ENCODE measurements at regions of chr2 and their contacts with region 1.

Region 1: GRCh38 chr2:31987464-31988220 is 23.2 kb downstream of the MEMO1 start:
- DNase-seq: peak; percentile 67
- H3K4me3 Mint-ChIP-seq: no peak overlapping the region
- H3K27ac Mint-ChIP-seq: no peak overlapping the region
- H3K4me1 Mint-ChIP-seq: peaks cover 17% of the 10 kb centered on the region
- H3K27me3 Mint-ChIP-seq: no peaks in the 10 kb centered on the region
- CTCF ChIP-seq: no peak

Region 2: GRCh38 chr2:31675485-31675901 is 312.1 kb before region 1 on chr2:
- CTCF ChIA-PET with region 1: no interaction called
- POLR2A ChIA-PET with region 1: no interaction called
- intact Hi-C with region 1: no loop called
- DNase-seq: peak; percentile 16
- H3K4me3 Mint-ChIP-seq: no peak overlapping the region
- H3K27ac Mint-ChIP-seq: no peak overlapping the region
- H3K4me1 Mint-ChIP-seq: peaks cover 11% of the 10 kb centered on the region
- H3K27me3 Mint-ChIP-seq: no peaks in the 10 kb centered on the region
- CTCF ChIP-seq: no peak

Region 3: DNA sequence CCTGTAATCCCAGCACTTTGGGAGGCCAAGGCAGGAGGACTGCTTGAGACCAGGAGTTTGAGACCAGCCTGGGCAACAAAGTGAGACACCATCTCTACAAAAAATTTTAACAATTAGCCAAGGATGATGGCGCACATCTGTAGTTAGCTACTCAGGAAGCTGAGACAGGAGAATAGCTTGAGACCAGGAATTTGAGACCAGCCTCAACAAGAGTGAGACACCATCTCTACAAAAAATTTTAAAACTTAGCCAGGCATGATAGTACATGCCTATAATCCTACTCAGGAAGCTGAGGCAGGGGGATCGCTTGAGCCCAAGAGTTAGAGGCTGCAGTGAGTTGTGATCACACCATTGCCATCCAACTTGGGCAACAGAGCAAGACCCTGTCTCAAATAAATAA is 16.1 kb after region 1 on chr2:
- CTCF ChIA-PET with region 1: interaction called, 6 read pairs
- POLR2A ChIA-PET with region 1: interaction called, 11 read pairs
- intact Hi-C with region 1: no loop called
- DNase-seq: peak; percentile 15
- H3K4me3 Mint-ChIP-seq: no peak overlapping the region
- H3K27ac Mint-ChIP-seq: peak overlapping the region; percentile 69
- H3K4me1 Mint-ChIP-seq: peaks cover 29% of the 10 kb centered on the region
- H3K27me3 Mint-ChIP-seq: no peaks in the 10 kb centered on the region
- CTCF ChIP-seq: no peak

Measured in MCF 10A (cell line).